ENCODE measurements at regions of chr7 and their contacts with region 1.

Region 1: GRCh38 chr7:35003679-35004303 is 33.5 kb downstream of the DPY19L1 start:
- DNase-seq: peak; percentile 73
- H3K4me3 ChIP-seq: no peak overlapping the region
- H3K27ac ChIP-seq: peak overlapping the region; percentile 85
- H3K4me1 ChIP-seq: peaks cover 24% of the 10 kb centered on the region
- H3K27me3 ChIP-seq: no peaks in the 10 kb centered on the region
- CTCF ChIP-seq: no peak
- POLR2A ChIP-seq: no peak

Region 2: DNA sequence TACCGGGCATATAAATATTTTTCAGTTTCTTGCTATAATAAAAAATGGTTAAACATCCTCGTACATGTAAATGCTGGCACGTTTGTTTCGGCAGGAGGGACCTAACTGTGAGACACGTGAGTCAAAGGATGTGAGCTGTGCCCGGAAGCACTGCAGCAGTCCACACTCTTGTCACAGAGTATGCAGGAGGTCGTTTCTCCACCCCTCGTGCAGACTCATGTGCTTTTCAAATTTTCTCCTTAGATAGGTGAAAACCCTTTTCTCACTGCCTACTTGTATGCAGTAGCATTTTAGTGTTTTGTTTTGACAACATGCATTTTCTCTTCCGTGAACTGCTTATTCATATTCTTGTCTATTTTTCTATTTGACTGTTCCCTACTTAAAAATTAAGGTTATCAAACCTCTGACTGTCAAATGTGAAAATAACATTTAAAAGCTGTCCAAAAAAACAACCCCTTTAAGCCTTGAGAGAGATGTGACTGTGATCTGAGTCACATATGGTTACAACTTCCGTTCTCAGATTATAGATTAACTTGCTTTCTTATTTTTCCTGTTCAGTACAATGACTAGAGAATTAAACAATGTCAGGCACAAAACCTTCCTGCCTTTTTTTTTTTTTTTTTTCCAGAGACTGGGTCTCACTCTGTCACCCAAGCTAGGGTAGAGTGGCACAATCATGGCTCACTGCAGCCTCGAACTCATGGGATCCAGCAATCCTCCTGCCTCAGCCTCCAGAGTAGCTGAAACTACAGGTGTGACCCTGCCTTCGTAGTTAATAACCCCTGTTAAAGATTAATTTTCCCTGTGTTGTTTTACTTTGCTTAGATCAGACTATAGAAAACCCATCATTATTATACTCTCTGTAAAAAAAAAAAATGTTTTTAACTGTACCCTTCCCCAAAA is 11.6 kb before region 1 on chr7:
- CTCF ChIA-PET with region 1: interaction called, 5 read pairs
- POLR2A ChIA-PET with region 1: no interaction called
- dilution Hi-C with region 1: no loop called
- intact Hi-C with region 1: loop called (anchors 1 kb)
- DNase-seq: peak; percentile 77
- H3K4me3 ChIP-seq: peak overlapping the region in 1 of 3 experiments; percentile 30
- H3K27ac ChIP-seq: peak overlapping the region; percentile 64
- H3K4me1 ChIP-seq: peaks cover 18% of the 10 kb centered on the region
- H3K27me3 ChIP-seq: no peaks in the 10 kb centered on the region
- CTCF ChIP-seq: no peak
- POLR2A ChIP-seq: peak; percentile 29